ENCODE measurements at regions of chr17 and their contacts with region 1.

Region 1: DNA sequence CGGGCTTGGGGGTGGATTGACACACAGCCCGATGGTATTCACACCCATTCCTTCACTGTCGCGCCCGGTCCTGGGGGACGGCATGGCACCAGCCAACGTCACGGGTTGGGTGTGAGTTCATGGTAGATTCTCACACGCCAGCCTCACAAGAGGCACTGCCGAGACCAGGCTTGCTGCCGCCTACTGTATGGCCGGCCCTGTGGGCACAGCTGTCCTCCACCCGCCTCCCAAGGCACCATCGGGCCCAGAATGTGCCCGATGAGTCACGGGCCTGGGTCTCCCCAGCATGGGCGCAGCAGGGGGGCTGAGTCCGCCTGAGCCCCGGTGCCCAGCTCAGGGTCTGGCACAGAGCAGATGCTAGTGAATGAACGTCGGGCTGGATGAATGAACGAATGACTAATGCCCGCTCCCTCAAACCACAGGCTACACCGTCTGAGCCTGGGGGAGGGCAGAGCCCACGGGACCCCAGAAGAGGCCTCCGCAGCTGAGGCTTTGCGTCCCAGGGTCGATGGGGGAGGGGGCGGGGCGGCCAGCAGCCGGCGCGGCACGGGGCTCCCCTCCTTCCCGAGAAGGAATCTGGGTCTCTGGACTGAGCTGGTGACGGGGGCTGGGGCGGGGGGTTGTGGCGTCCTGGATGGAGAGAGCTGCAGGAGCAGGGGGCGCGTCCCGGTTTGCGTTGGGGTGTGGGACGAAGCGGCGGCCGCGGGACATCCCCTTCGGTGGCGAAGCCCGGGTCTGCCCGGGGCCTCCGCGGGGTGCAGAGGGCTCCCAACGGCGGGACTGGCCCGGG is 829 bp downstream of the PITPNM3 start:
- DNase-seq: peak; percentile 50
- ATAC-seq: peak; percentile 53

Region 2: GRCh38 chr17:6473128-6473767 is 82.3 kb before region 1 on chr17:
- intact Hi-C with region 1: loop called (anchors 10 kb)
- DNase-seq: peak; percentile 82
- ATAC-seq: peak; percentile 81

Region 3: DNA sequence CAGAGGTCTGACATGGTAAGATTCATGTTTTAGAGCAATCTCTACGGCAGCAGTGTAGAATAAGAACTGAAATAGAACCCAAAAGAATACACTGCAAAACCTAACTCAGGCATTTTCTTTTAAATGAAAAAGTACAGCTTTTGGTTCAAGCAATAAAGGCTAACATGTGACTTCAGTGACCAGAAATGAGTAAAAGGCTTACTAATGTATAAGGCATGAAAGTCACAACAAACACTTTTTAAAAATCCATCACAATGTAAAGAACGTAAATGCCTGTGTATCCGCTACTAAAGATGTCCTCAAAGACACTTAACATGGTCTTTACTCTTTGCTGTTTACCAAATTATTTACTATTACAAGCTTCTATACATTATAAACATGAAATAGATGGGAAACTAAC is 68.4 kb after region 1 on chr17:
- intact Hi-C with region 1: no loop called
- DNase-seq: no peak
- ATAC-seq: no peak

Region 4: GRCh38 chr17:6755731-6756184 is 200.2 kb after region 1 on chr17 and contains the start of gene XAF1:
- intact Hi-C with region 1: no loop called
- DNase-seq: peak; percentile 53
- ATAC-seq: peak; percentile 69
- total RNA-seq, gene XAF1: 16.6 TPM

Measured in Right ventricle myocardium superior (tissue), 1 donor.